ENCODE measurements at regions of chr17 and their contacts with region 1.

Region 1: GRCh38 chr17:50949989-50950881 is 84.1 kb upstream of the TOB1 start:
- DNase-seq: peak in 1 of 2 experiments; percentile 86
- H3K4me3 ChIP-seq: no peak overlapping the region; a peak in 1 of 8 replicates
- H3K27ac ChIP-seq: no peak overlapping the region; the same call in 1 of the 2 replicates
- H3K4me1 ChIP-seq: peaks cover 3 to 32% (median 23%) of the 10 kb centered on the region in 4 experiments
- H3K27me3 ChIP-seq: no peaks in the 10 kb centered on the region
- CTCF ChIP-seq: peak; percentile 88 to 95 (median 90)
- EP300 ChIP-seq: no peak
- POLR2A ChIP-seq: no peak
- RAD21 ChIP-seq: peak; percentile 99 to 100

Region 2: GRCh38 chr17:50697663-50698274 is 252.5 kb before region 1 on chr17:
- CTCF ChIA-PET with region 1: no interaction called
- POLR2A ChIA-PET with region 1: no interaction called
- DNase-seq: no peak
- H3K4me3 ChIP-seq: no peak overlapping the region
- H3K27ac ChIP-seq: no peak overlapping the region
- H3K4me1 ChIP-seq: no peaks in the 10 kb centered on the region
- H3K27me3 ChIP-seq: no peaks in the 10 kb centered on the region
- CTCF ChIP-seq: peak in 2 of 3 experiments; percentile 11 to 12; a peak in 1 of 4 replicates
- EP300 ChIP-seq: no peak
- POLR2A ChIP-seq: no peak
- RAD21 ChIP-seq: peak; percentile 25 to 37; a peak in 3 of 4 replicates

Region 3: DNA sequence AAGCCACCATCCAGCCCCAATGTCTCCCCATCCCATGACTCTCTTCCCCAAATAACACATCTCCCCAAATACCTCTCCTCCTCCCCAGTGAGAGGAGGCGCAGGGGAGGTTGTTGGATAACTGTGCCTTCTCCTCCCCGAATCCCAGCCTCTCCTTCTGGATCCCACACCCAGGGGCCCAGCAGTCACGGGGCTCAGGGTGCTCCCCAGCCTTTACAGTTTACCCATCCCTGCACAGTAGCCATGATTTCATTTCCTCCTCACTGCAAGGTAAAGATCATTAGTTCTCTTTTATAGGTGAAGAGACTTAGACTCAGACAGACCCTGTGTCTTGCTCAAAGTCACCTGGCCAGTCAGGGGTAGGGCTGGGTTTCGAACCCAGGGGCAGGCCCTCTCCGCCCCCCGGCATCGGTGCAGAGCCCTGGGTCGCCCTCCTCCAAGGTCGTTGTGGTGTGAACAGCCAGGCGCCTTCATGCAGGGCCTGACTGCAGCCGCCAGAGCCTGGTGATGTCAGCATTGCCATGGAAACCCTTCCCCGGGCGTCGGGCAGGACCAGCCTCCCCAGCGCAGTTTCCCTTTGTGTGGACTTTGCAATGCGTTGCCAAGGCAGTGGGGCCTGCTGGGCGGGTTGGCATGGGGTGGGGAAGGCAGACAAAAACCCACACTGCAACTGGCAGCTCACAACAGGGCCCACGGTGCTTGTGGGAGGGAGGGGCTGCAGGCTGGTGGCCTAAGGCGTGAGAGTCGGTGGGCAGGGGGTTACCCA is 30.7 kb before region 1 on chr17:
- CTCF ChIA-PET with region 1: interaction called, 15 read pairs
- POLR2A ChIA-PET with region 1: no interaction called
- DNase-seq: peak in 1 of 2 experiments; percentile 82
- H3K4me3 ChIP-seq: no peak overlapping the region
- H3K27ac ChIP-seq: no peak overlapping the region; the same call in 1 of the 2 replicates
- H3K4me1 ChIP-seq: peaks cover 2 to 48% (median 34%) of the 10 kb centered on the region in 4 experiments
- H3K27me3 ChIP-seq: peaks cover 0 to 2% (median 0%) of the 10 kb centered on the region in 4 experiments; a peak in 2 of 7 replicates
- CTCF ChIP-seq: no peak
- EP300 ChIP-seq: no peak
- POLR2A ChIP-seq: no peak
- RAD21 ChIP-seq: no peak